Heart left ventricle (tissue), 16 donors: ENCODE measurements at regions of chr13 and their contacts with region 1.

Region 1: GRCh38 chr13:44322928-44323327 is 50.7 kb upstream of the SERP2 start:
- DNase-seq: no peak
- ATAC-seq: no peak
- H3K4me3 ChIP-seq: no peak overlapping the region
- H3K27ac ChIP-seq: no peak overlapping the region
- H3K4me1 ChIP-seq: peaks cover 0 to 3% (median 0%) of the 10 kb centered on the region in 12 donors
- H3K27me3 ChIP-seq: no peaks in the 10 kb centered on the region
- CTCF ChIP-seq: no peak
- POLR2A ChIP-seq: no peak

Region 2: GRCh38 chr13:44068737-44069136 is 254.2 kb before region 1 on chr13:
- intact Hi-C with region 1: no loop called
- DNase-seq: no peak
- ATAC-seq: no peak
- H3K4me3 ChIP-seq: no peak overlapping the region
- H3K27ac ChIP-seq: no peak overlapping the region
- H3K4me1 ChIP-seq: peaks cover 0 to 9% (median 0%) of the 10 kb centered on the region in 12 donors
- H3K27me3 ChIP-seq: no peaks in the 10 kb centered on the region
- CTCF ChIP-seq: no peak
- POLR2A ChIP-seq: no peak

Region 3: DNA sequence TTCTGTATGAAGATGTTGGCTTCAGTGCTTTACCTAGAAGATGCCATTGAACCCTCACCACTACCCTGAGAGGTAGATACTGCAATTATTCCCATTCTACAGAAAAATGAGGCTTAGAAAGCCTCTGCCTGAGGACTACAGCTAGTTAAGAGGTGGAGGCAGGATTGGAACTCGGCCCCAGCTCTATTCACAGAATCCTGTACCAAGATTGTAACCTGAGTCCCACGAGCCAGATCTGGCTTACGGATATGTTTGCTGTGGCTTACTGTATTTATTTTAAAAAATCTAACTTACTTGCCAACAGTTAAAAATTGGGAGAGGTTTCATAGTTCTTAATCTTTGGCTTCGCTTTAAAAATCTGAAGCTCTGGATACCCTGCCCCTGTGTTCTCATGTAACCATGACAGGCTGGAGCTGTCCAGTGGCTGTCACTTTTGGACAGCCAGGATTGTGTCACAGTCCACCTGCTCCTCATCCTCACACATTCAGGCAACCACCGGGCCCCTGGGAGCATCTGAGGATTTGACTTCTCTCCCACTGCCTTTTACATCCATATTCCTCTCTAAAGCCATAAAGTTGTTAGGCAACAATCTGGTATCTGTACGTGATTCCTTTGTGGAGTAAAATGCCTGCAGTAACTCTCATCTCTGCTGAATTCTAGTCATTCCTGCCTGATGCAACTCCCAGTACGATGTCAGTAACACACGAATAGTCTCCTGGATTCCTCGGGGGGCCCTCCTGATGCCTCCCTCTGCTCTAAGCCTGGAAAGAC is 110.1 kb before region 1 on chr13:
- intact Hi-C with region 1: no loop called
- DNase-seq: peak in 1 of 5 donors; percentile 47
- ATAC-seq: peak; percentile 31 to 74 (median 68)
- H3K4me3 ChIP-seq: no peak overlapping the region
- H3K27ac ChIP-seq: peak overlapping the region in 1 of 12 donors; percentile 29
- H3K4me1 ChIP-seq: peaks cover 0 to 11% (median 0%) of the 10 kb centered on the region in 12 donors
- H3K27me3 ChIP-seq: no peaks in the 10 kb centered on the region
- CTCF ChIP-seq: no peak
- POLR2A ChIP-seq: no peak

Region 4: GRCh38 chr13:44355643-44356042 is 32.7 kb after region 1 on chr13:
- intact Hi-C with region 1: loop called in 1 of 10 experiments (anchors 5 kb)
- DNase-seq: no peak
- ATAC-seq: no peak
- H3K4me3 ChIP-seq: no peak overlapping the region
- H3K27ac ChIP-seq: no peak overlapping the region
- H3K4me1 ChIP-seq: no peaks in the 10 kb centered on the region
- H3K27me3 ChIP-seq: no peaks in the 10 kb centered on the region
- CTCF ChIP-seq: no peak
- POLR2A ChIP-seq: no peak